PC-9 (cell line): ENCODE measurements at regions of chr22 and their contacts with region 1.

Region 1: DNA sequence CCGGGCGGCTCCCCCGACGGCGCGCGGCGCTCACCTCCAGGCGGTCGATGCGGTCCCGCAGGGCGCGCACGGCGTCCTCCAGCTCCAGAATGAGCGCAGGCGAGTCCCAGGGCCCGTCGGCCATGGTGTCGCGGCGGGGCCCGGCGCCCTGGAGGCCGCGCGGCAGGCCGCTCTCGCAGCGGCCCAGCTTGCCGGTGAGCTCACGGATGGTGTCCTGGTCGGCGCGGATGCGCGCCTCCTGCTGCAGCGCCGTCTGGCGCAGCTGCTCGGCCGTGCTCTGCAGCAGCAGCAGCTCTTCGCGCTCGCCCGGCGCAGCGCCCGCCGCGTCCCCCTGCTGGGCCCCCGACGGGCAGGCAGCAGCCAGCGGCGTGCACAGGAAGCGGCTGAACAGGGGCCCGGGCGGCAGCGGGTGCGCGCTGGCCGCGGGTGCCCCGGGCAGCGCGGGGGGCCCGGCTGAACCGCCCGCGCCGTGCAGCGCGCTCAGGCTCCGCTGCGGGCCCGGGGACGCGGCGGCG is 570 bp downstream of the NPTXR start:
- DNase-seq: peak; percentile 62 to 64
- H3K4me3 ChIP-seq: peak overlapping the region; percentile 67; the same call in 1 of the 2 replicates
- H3K27ac ChIP-seq: no peak overlapping the region
- H3K4me1 ChIP-seq: peaks cover 24% of the 10 kb centered on the region
- H3K27me3 ChIP-seq: no peaks in the 10 kb centered on the region; the same call in 1 of the 2 replicates
- CTCF ChIP-seq: no peak; the same call in 1 of the 2 replicates

Region 2: DNA sequence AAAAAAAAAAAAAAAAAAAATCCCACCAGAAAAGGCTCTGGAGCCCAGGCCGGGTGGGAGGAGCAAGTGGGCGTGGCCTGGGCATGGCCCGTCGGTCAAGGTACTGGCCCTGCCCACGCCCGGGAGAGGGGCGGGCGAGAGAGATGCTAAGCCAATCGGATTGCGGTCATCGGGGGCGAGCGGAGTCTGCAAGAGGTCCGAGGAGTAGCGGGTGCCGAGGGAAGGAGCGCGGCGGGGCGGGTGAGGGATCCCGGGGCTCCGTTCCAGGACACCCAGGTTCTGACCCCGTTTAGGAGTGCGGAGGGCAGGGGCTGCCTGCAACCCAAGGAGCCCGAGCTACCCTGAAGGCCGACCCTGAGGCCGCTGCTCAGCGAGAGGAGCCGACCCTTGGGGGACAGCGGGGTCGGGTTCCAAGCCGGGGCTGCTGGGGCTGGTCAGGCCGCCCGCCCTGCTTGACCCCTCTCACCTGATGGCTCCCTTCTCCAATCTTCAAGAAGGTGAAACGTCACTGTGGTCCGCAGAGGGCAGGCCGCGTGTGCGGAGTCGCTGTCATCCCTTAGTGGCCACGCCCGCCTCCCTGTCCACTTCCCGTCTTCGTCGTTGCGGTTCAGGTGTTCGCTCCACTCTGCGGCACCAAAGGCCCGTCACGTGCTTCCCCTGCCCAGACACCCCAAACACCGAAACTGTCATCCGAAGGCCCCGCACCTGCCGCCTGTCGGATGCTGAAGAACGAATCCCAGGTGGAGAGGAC is 545.2 kb after region 1 on chr22:
- CTCF ChIA-PET with region 1: interaction called, 13 read pairs
- POLR2A ChIA-PET with region 1: no interaction called
- intact Hi-C with region 1: no loop called
- DNase-seq: peak; percentile 78 to 85
- H3K4me3 ChIP-seq: peak overlapping the region; percentile 54
- H3K27ac ChIP-seq: no peak overlapping the region
- H3K4me1 ChIP-seq: peaks cover 7% of the 10 kb centered on the region; the same call in 1 of the 2 replicates
- H3K27me3 ChIP-seq: no peaks in the 10 kb centered on the region; the same call in 1 of the 2 replicates
- CTCF ChIP-seq: no peak

Region 3: DNA sequence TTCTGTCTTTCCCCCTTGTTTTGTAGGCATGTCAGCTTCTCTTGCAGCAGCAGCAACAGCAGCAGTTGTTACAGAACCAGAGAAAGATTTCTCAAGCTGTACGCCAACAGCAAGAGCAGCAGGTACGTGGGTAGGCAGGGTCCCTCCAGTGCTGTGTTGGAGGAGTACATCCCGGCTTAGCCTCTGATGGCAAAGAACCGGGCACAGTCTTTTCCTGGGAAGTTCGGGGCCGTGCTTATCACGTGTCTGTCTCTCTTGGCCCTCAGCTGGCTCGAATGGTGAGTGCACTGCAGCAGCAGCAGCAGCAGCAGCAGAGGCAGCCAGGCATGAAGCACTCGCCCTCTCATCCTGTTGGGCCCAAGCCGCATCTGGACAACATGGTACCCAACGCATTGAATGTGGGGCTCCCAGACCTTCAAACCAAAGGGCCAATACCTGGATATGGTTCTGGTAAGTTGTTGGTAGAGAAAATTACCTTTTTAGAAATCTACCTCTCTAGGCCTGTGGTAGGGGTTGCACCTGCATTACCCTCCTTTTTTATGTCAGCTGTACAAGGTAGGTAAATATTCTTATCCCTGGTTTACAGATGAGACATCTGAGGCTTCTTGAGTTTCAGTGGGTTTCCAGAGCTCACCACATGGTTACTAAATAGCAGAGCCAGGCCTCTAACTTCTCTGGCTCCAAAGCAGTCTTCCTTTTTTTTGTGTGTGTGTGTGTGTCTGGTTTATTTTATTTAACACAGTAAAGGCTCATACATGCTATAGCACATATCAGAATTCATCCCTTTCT is 1457.8 kb after region 1 on chr22:
- CTCF ChIA-PET with region 1: no interaction called
- POLR2A ChIA-PET with region 1: no interaction called
- intact Hi-C with region 1: no loop called
- DNase-seq: no peak
- H3K4me3 ChIP-seq: no peak overlapping the region
- H3K27ac ChIP-seq: no peak overlapping the region
- H3K4me1 ChIP-seq: no peaks in the 10 kb centered on the region
- H3K27me3 ChIP-seq: no peaks in the 10 kb centered on the region
- CTCF ChIP-seq: no peak